Psoas muscle (tissue), 8 donors: ENCODE measurements at regions of chr6 and their contacts with region 1.

Region 1: DNA sequence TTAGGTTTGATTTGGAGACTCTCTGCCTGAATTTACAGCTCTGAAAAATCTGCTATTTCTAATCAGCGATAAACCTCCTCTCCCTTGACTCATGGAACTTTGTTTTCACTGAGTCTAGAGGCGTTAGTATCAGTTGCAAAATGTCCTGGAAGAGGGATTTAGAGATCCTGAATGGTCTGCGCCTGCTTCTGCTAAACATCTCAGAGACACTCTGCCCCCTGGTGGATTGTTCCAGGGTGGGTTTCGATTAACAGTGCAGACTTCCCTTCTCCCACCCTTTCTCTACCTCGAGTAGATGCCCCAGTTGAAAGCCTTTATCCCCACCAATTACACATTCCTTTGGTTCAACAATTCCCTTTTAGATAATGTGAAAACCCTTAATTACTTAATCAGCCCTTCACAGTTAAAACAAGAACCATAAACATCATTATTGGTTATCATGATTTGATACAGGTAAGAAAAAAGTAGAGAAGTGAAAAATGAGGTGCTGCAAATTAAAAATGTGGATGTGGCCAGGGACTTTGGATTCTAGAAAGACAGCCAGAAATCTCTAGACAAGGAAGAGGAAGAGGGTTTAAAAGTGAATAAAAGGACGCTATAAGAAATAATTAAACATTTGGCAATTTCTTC is 5.5 kb downstream of the HTR1B start:
- DNase-seq: peak; percentile 44 to 57
- ATAC-seq: peak in 3 of 4 donors; percentile 61 to 75 (median 63)
- H3K4me3 ChIP-seq: no peak overlapping the region
- H3K27ac ChIP-seq: no peak overlapping the region
- H3K4me1 ChIP-seq: no peaks in the 10 kb centered on the region
- H3K27me3 ChIP-seq: peaks cover 0 to 21% (median 8%) of the 10 kb centered on the region in 3 donors
- CTCF ChIP-seq: peak; percentile 59

Region 2: GRCh38 chr6:75893058-75893775 is 1564.6 kb before region 1 on chr6:
- intact Hi-C with region 1: loop called in 1 of 2 experiments (anchors 5 kb)
- DNase-seq: no peak
- ATAC-seq: peak in 2 of 4 donors; percentile 43 to 65
- H3K4me3 ChIP-seq: no peak overlapping the region
- H3K27ac ChIP-seq: no peak overlapping the region
- H3K4me1 ChIP-seq: no peaks in the 10 kb centered on the region
- H3K27me3 ChIP-seq: no peaks in the 10 kb centered on the region
- CTCF ChIP-seq: peak; percentile 78

Region 3: GRCh38 chr6:75934643-75935472 is 1523.0 kb before region 1 on chr6:
- intact Hi-C with region 1: loop called (anchors 5 to 10 kb)
- DNase-seq: no peak
- ATAC-seq: peak; percentile 34 to 82 (median 56)
- H3K4me3 ChIP-seq: peak overlapping the region; percentile 58
- H3K27ac ChIP-seq: no peak overlapping the region
- H3K4me1 ChIP-seq: no peaks in the 10 kb centered on the region
- H3K27me3 ChIP-seq: peaks cover 0 to 2% (median 0%) of the 10 kb centered on the region in 3 donors
- CTCF ChIP-seq: peak; percentile 65

Region 4: DNA sequence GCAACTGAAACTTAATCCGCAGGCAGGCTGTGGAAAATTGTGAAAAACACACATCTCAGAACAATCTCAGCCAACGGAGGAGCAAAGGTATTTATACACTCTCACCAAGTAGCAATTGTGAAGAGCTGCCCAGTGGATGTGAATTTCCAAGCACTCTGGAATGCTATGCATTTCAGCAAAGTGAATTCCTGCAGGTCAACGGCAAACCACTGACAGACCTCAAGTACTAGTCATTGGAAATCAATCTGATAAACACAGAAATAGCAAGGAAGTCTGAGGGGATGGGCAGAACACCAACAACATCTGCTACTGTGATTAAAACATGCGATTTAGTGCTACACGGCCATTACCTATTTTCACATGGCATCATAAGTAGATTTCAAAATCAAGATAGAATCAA is 423.7 kb before region 1 on chr6:
- intact Hi-C with region 1: no loop called
- DNase-seq: no peak
- ATAC-seq: no peak
- H3K4me3 ChIP-seq: no peak overlapping the region
- H3K27ac ChIP-seq: no peak overlapping the region
- H3K4me1 ChIP-seq: no peaks in the 10 kb centered on the region
- H3K27me3 ChIP-seq: no peaks in the 10 kb centered on the region
- CTCF ChIP-seq: no peak

Region 5: GRCh38 chr6:77383026-77383425 is 74.8 kb before region 1 on chr6:
- intact Hi-C with region 1: no loop called
- DNase-seq: no peak
- ATAC-seq: no peak
- H3K4me3 ChIP-seq: no peak overlapping the region
- H3K27ac ChIP-seq: no peak overlapping the region
- H3K4me1 ChIP-seq: no peaks in the 10 kb centered on the region
- H3K27me3 ChIP-seq: no peaks in the 10 kb centered on the region
- CTCF ChIP-seq: no peak